ENCODE measurements at regions of chr10 and their contacts with region 1.

Region 1: DNA sequence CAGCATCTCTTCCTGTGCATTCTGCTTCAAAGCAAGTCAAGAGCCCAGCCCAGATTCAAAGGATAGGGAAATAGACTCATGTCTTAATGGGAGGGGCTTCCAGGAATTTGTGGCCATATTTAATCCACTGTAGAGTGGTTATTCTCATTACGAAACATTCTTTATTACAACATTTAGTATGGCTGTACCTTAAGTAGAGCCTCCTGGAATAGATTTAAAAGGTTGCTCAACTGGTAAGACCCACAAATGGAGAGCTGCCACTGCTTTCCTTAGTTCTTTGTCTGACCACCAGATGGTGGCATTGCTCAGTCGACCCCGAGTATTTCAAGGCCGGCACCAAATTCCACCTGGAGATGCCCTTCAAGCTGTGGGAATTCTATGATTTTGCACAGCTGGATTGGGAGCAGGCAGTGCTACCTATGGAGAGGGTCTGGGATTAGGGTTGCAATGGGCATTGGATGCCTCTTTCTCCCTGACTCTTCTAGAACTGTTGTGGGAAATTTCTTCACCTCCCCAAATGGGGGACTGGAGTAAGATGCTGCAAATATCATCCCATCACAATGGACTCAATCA is 102.2 kb downstream of the RBM20 start:
- DNase-seq: peak; percentile 71
- H3K4me3 ChIP-seq: no peak overlapping the region
- H3K27ac ChIP-seq: no peak overlapping the region
- H3K4me1 ChIP-seq: peaks cover 58% of the 10 kb centered on the region
- CTCF ChIP-seq: peak; percentile 99

Region 2: DNA sequence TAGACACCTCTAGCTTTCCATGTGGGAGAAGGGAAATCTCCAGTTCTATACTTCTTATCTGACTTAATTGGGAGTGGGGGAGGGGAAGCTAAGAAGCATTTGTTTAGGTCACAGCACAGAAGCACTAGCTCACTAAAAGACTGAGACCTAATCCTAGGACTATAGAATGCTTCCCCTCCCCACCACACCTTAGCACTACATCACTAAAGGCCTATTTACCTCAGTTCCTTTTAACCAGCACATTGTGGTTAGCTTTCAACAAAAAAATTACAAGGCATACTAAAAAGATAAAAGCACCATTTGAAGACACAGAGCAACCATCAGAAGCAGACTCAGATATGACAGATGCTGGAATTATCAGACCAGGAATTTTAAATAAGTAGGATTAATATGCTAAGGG is 276.7 kb after region 1 on chr10:
- CTCF ChIA-PET with region 1: no interaction called
- POLR2A ChIA-PET with region 1: interaction called, 3 read pairs
- intact Hi-C with region 1: loop called (anchors 10 kb)
- DNase-seq: no peak
- H3K4me3 ChIP-seq: no peak overlapping the region
- H3K27ac ChIP-seq: no peak overlapping the region
- H3K4me1 ChIP-seq: no peaks in the 10 kb centered on the region
- CTCF ChIP-seq: no peak

Region 3: DNA sequence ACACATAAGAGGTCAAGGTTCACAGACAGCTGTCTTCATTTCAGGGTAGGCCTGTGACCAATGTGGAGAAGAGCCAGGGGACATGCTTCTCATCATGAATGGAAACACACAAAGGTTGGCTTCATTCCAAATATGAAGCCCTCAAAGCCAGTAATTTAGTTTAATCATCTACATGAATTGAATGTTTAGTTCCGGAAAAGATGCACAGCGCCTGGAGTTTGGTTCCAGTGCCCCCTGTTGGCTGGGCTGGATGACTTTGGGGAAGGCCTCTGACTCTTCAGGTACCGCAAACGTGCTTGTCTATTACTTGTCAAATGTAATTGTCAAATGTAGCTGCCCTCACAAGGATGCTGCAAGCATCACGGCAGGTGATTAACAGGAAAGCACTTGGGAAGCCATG is 461.2 kb after region 1 on chr10:
- CTCF ChIA-PET with region 1: no interaction called
- POLR2A ChIA-PET with region 1: no interaction called
- intact Hi-C with region 1: loop called (anchors 1 kb)
- DNase-seq: peak; percentile 38
- H3K4me3 ChIP-seq: no peak overlapping the region
- H3K27ac ChIP-seq: no peak overlapping the region
- H3K4me1 ChIP-seq: no peaks in the 10 kb centered on the region
- CTCF ChIP-seq: peak; percentile 70

Region 4: DNA sequence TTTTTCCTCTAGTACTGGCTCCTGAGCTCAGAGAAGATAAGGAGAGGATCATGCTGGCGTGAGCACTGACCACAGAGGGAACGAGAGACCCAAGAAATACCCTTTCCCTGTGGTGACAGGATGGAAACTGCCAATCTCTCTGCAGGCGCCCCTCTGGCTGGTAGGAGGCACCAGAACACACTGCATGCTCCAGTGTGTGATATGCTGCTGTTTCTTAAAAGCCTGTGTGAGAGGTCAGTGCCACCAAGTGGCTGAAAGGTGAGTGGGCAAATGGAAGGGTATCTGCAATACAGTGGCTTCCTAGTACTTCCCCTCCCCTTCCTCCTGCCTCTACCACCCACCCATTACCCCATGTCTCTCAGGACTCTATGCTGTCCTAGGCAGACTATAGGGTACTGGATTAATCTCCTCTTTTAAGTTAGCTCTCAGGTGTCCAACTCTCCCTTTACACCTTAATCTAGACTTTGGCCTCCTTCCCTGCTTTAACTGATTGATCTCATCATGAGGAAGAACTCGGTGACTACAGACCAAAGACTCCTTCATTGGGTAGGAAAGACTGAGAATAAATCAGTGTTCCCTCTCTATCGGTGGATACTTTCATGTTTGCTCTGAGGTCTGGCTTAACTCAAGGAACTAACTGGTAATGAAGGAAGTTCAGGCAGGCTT is 614.1 kb after region 1 on chr10:
- CTCF ChIA-PET with region 1: no interaction called
- POLR2A ChIA-PET with region 1: no interaction called
- intact Hi-C with region 1: loop called (anchors 1 kb)
- DNase-seq: peak; percentile 64
- H3K4me3 ChIP-seq: no peak overlapping the region
- H3K27ac ChIP-seq: no peak overlapping the region
- H3K4me1 ChIP-seq: no peaks in the 10 kb centered on the region
- CTCF ChIP-seq: peak; percentile 80

Region 5: GRCh38 chr10:111598436-111599059 is 852.2 kb after region 1 on chr10:
- CTCF ChIA-PET with region 1: no interaction called
- POLR2A ChIA-PET with region 1: no interaction called
- intact Hi-C with region 1: loop called (anchors 2 kb)
- DNase-seq: peak; percentile 55
- H3K4me3 ChIP-seq: no peak overlapping the region
- H3K27ac ChIP-seq: no peak overlapping the region
- H3K4me1 ChIP-seq: no peaks in the 10 kb centered on the region
- CTCF ChIP-seq: peak; percentile 89